GM12878 (cell line): ENCODE measurements at regions of chr9 and their contacts with region 1.

Region 1: DNA sequence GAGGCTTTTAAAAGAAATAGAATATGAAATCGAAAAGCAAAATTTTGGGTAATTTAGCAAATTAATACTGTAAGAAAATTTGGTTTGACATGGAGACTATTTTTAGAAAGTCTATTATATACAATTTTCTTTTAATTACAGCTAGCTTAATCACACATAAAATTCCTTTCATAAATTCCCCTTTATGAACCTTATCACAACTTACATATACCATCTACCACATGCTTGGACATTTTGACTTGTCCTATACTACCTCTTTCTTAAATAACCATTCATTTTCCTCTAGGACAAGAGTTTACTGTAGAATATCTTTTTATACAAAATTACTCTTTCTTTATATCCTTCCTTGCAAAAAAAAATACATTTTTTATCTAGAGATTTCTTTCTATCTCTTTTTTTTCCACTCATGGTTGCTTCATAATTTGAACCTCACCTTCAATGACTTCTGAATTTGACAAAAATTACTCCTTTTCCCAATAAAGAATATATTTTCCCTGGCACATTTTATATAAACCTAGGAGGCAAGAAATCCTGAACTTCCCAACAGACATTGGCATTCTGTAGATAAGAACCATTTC is 34.0 kb upstream of the SYK start:
- DNase-seq: no peak
- ATAC-seq: no peak
- H3K4me3 ChIP-seq: no peak overlapping the region
- H3K27ac ChIP-seq: no peak overlapping the region
- H3K4me1 ChIP-seq: peaks cover 20% of the 10 kb centered on the region
- H3K27me3 ChIP-seq: no peaks in the 10 kb centered on the region
- CTCF ChIP-seq: no peak
- EP300 ChIP-seq: no peak
- POLR2A ChIP-seq: no peak
- RAD21 ChIP-seq: no peak

Region 2: GRCh38 chr9:90219548-90220118 is 548.0 kb before region 1 on chr9:
- CTCF ChIA-PET with region 1: no interaction called
- POLR2A ChIA-PET with region 1: no interaction called
- RAD21 ChIA-PET with region 1: no interaction called
- SMC1A ChIA-PET with region 1: no interaction called
- in situ Hi-C with region 1: loop called (anchors 10 kb)
- intact Hi-C with region 1: no loop called
- DNase-seq: no peak
- ATAC-seq: peak; percentile 61
- H3K4me3 ChIP-seq: no peak overlapping the region
- H3K27ac ChIP-seq: no peak overlapping the region
- H3K4me1 ChIP-seq: no peaks in the 10 kb centered on the region
- H3K27me3 ChIP-seq: no peaks in the 10 kb centered on the region
- CTCF ChIP-seq: peak; percentile 47 to 66 (median 47); a peak in 5 of 6 replicates
- EP300 ChIP-seq: no peak
- POLR2A ChIP-seq: no peak
- RAD21 ChIP-seq: peak; percentile 65

Region 3: GRCh38 chr9:90827181-90827871 is 59.7 kb after region 1 on chr9:
- CTCF ChIA-PET with region 1: no interaction called
- POLR2A ChIA-PET with region 1: no interaction called
- RAD21 ChIA-PET with region 1: no interaction called
- SMC1A ChIA-PET with region 1: no interaction called
- in situ Hi-C with region 1: no loop called
- intact Hi-C with region 1: no loop called
- DNase-seq: peak; percentile 77
- ATAC-seq: peak; percentile 79
- H3K4me3 ChIP-seq: peak overlapping the region; percentile 75
- H3K27ac ChIP-seq: peak overlapping the region; percentile 76
- H3K4me1 ChIP-seq: peaks cover 36% of the 10 kb centered on the region
- H3K27me3 ChIP-seq: no peaks in the 10 kb centered on the region
- CTCF ChIP-seq: no peak
- EP300 ChIP-seq: peak; percentile 34 to 42; a peak in 2 of 4 replicates
- POLR2A ChIP-seq: peak; percentile 53
- RAD21 ChIP-seq: no peak